ENCODE measurements at regions of chr17 and their contacts with region 1.

Region 1: GRCh38 chr17:73429440-73430164 is 117.8 kb upstream of the CDC42EP4 start:
- DNase-seq: peak; percentile 92
- ATAC-seq: peak; percentile 89 to 93

Region 2: DNA sequence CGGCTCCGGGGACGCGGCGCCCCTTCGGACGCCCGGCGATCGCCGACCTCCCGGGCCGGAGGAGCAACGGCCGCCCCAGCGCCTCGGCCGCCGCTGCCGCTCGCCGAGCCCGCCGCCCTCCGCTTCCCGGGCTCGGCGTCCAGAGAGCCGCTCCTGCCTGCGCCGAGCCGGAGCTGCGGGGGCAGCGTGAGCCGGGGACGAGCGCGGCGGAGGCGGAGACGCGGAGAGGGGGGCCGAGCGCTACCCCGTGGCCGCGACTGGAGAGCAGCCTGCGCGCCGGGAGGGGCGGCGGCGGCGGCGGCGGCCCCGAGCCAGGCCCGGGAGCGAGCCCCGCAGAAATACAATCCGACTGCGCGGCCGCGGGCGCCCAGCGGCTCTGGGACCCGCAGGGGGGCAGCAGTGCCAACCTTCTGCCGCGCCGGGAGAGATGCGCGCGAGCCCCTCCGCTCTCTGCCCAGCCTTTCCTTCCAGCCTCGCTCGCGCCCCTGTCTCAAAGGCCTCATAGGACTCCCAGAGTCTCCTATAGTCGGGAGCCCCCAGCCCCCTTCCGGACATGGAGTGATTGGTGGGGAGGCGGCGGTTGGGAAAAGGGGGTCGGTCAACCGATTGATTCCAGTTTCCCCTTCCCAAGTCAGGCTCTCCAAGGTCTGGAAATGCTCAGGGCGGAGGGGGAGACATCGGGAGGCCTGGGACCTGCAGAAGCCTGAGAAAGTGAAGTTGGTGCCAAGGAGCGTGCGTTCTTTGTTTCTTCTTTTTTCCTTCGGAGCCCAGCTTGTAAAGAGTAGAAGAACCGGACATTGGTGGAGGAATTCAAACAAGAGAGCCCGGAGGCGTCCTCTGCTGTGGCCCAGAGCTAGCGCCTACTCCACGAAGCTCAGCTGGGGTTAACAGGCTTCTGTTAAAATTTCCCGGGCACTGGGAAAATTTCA is 215.7 kb after region 1 on chr17:
- intact Hi-C with region 1: loop called (anchors 5 kb)
- DNase-seq: peak; percentile 57
- ATAC-seq: peak; percentile 79 to 85

Region 3: DNA sequence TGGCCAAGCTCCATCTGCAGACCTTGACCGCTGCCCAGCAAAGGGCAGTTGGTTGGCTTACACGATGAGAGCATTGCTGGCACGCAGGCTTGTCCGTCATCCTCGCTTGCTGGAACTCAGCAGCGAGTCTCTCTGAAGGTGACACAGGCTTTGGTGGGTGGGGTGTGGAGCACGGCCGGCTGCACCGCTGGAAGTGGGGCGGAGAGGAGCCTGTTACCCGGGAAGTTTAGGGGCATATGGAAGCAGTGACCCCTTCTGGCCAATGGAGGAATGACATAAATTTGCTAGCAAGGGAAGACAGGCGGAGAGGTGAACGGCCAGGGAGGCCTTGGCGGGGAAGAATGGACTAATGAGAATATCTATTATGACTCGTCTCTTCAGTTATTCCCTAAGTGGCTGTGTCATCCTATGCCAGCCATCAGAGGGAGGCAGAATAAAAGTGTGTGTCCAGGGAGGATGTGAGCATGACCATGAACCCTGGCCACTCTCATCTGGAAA is 280.5 kb after region 1 on chr17:
- intact Hi-C with region 1: loop called (anchors 1 to 10 kb)
- DNase-seq: peak; percentile 67
- ATAC-seq: peak; percentile 93 to 96

Region 4: DNA sequence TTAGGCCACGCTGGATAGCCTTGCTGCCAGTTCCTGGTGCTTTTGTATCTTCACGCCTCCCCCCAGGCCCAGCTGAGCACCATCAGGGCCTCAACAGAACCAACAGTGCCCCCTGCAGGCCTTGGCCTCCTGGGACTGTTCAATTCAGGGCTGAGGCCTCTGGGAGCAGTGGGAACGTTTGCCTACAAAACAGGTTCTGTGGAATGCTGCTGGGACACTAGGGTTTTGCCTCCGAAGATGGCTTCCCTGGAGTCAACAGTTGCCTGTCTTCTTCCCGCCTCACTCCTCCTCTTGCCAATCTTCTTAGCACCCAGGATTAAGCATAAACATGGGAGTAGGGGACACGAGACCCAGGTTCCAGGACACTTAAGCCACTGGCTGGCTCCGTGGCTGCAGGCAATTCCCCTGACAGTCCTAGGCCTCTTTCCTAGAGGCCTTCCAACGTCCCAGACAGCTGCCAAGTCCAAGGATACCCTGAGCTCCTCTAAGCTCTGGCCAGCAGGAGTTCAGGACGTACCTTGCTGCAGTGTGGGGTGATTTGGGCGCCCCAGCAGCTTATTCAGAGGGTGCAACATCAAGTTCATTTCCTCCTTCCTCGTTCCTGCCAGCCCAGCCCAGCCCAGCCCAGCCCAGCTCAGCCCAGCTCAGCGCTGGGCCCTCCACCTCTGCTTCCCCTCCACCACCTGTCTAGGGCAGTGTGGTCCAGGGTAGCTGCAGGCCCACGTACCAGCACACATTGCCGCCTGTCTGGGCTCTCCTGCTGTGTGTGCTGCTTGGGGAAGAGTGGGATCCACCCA is 527.3 kb after region 1 on chr17:
- intact Hi-C with region 1: loop called in 1 of 2 experiments (anchors 5 kb)
- DNase-seq: peak; percentile 59
- ATAC-seq: peak in 1 of 2 donors; percentile 51

Region 5: DNA sequence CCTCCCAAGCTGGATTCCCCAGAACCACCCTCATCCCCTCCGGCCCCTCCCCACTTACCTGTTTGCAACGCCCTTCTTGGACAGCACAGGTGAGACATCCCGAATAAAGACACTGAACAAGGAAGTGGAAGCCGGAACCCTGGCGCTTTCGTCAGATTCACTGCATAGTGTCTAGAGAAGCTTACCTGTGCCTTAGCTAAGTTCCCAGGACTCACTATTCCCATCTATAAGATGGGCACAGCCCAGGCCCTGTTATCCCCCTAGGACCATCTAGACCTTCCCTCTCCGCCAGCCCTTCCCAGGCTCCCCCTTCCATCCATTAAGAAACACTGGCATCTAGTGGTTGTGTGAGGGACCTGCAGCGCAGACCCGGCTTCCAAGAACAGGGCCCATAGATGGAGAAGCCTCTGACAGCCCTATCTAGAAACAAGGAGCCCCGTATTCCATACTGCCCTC is 747.0 kb after region 1 on chr17:
- intact Hi-C with region 1: loop called (anchors 2 to 10 kb)
- DNase-seq: peak; percentile 55
- ATAC-seq: peak; percentile 78 to 90